CD4-positive, alpha-beta memory T cell (primary cell): ENCODE measurements at regions of chr9 and their contacts with region 1.

Region 1: GRCh38 chr9:133701862-133702797 is 36.0 kb downstream of the SARDH start:
- DNase-seq: peak; percentile 69 to 81 (median 75)
- H3K4me3 ChIP-seq: peak overlapping the region; percentile 27 to 61
- H3K4me3 Mint-ChIP-seq: peak overlapping the region; percentile 83 to 93 (median 89)
- H3K27ac ChIP-seq: peak overlapping the region; percentile 74
- H3K27ac Mint-ChIP-seq: peak overlapping the region; percentile 96 to 99 (median 98)
- H3K4me1 ChIP-seq: peaks cover 65% of the 10 kb centered on the region
- H3K4me1 Mint-ChIP-seq: peaks cover 36 to 75% (median 53%) of the 10 kb centered on the region in 4 donors
- H3K27me3 ChIP-seq: no peaks in the 10 kb centered on the region
- H3K27me3 Mint-ChIP-seq: no peaks in the 10 kb centered on the region

Region 2: DNA sequence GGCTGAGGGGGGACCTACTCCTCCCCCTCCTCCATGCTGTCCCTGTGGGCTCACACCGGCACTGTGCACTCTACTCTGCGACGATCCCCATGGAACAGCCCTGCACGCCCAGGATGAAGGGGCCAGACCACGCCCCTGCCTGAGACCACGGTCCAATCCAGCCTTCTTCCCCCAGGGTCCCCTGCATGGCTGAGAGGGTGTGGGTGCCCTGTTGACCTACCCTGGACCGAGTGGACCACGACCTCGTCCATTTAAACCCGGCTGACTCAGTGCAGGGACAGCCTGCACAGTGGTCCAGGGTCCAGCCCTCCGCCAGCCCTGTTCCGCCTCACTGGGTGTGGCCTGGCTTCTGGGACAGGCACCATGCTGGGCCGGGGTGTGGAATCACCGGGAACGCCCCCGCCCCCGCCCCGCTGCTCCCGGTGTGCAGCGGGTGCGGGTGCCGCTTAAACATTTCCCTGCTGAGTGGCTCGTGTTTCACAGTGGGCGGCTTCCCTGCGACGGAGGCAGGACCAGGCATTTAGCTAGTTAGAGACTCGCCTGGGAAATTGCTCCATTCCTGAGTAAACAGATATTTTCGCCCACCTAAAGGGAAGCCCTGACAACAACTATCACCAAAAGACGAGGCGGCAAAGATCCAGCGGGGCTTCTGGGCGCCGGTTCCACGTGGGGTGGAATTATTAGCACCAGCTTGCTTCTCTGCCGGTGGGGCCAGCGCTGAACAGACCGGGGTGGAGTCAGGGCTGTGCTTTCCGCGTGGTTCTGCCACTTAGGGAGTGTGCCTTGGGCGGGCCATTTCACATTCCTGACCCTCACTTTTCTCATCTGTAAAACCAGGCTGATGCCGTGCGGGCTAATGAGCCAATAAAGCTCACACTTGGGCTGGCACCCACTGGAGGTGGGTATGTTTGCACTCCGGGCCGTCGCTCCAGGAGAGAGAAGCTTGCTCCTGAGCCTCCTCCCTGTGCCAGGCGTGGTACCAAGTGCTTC is 43.4 kb before region 1 on chr9:
- CTCF ChIA-PET with region 1: no interaction called
- POLR2A ChIA-PET with region 1: interaction called, 10 read pairs
- intact Hi-C with region 1: loop called (anchors 2 kb)
- DNase-seq: no peak
- H3K4me3 ChIP-seq: no peak overlapping the region
- H3K4me3 Mint-ChIP-seq: peak overlapping the region in 5 of 8 donors; percentile 27 to 74 (median 69)
- H3K27ac ChIP-seq: no peak overlapping the region
- H3K27ac Mint-ChIP-seq: peak overlapping the region in 2 of 7 donors; percentile 15 to 77
- H3K4me1 ChIP-seq: peaks cover 34% of the 10 kb centered on the region
- H3K4me1 Mint-ChIP-seq: peaks cover 12 to 43% (median 24%) of the 10 kb centered on the region in 4 donors
- H3K27me3 ChIP-seq: peaks cover 6% of the 10 kb centered on the region
- H3K27me3 Mint-ChIP-seq: peaks cover 8 to 36% of the 10 kb centered on the region in 2 donors

Region 3: GRCh38 chr9:133677126-133678010 is 24.8 kb before region 1 on chr9:
- CTCF ChIA-PET with region 1: interaction called, 7 read pairs
- POLR2A ChIA-PET with region 1: interaction called, 140 read pairs
- intact Hi-C with region 1: no loop called
- DNase-seq: peak; percentile 80 to 91 (median 84)
- H3K4me3 ChIP-seq: peak overlapping the region in 1 of 2 donors; percentile 33
- H3K4me3 Mint-ChIP-seq: peak overlapping the region; percentile 9 to 81 (median 64)
- H3K27ac ChIP-seq: peak overlapping the region; percentile 86
- H3K27ac Mint-ChIP-seq: peak overlapping the region; percentile 94 to 100 (median 100)
- H3K4me1 ChIP-seq: peaks cover 38% of the 10 kb centered on the region
- H3K4me1 Mint-ChIP-seq: peaks cover 21 to 59% (median 40%) of the 10 kb centered on the region in 4 donors
- H3K27me3 ChIP-seq: no peaks in the 10 kb centered on the region
- H3K27me3 Mint-ChIP-seq: no peaks in the 10 kb centered on the region

Region 4: DNA sequence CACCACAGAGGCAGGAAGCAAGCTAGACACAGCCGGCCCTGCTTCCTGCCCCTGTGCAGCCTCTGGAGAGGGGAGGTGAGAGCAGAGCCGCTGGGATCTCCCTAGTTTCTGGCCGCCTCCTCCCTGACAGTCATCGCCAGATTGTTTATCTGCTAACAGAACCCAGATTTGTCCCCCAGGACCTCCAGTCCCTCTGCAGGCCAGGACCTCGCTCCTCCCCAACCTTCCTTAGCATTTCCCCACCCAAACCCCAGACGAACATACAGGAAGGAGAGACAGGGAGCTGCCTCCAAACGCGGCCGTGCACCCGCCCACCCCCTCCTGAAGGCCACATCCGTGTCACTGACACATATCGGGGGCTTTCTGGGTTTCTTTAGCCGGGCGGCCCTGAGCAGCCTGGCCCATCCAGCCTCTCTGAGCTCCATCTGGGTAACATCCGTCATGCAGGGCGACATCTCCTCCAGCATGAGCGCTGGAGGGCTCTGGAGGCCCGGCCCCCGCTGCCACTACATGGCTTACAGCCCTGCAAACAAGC is 18.5 kb before region 1 on chr9:
- CTCF ChIA-PET with region 1: interaction called, 12 read pairs
- POLR2A ChIA-PET with region 1: interaction called, 140 read pairs
- intact Hi-C with region 1: loop called (anchors 1 kb)
- DNase-seq: peak; percentile 70 to 91 (median 81)
- H3K4me3 ChIP-seq: peak overlapping the region in 1 of 2 donors; percentile 9
- H3K4me3 Mint-ChIP-seq: peak overlapping the region; percentile 74 to 93 (median 84)
- H3K27ac ChIP-seq: peak overlapping the region; percentile 89
- H3K27ac Mint-ChIP-seq: peak overlapping the region; percentile 92 to 100 (median 99)
- H3K4me1 ChIP-seq: peaks cover 34% of the 10 kb centered on the region
- H3K4me1 Mint-ChIP-seq: peaks cover 18 to 42% (median 31%) of the 10 kb centered on the region in 4 donors
- H3K27me3 ChIP-seq: no peaks in the 10 kb centered on the region
- H3K27me3 Mint-ChIP-seq: no peaks in the 10 kb centered on the region

Region 5: GRCh38 chr9:133691626-133692363 is 10.3 kb before region 1 on chr9:
- CTCF ChIA-PET with region 1: interaction called, 7 read pairs
- POLR2A ChIA-PET with region 1: interaction called, 140 read pairs
- intact Hi-C with region 1: no loop called
- DNase-seq: no peak
- H3K4me3 ChIP-seq: no peak overlapping the region
- H3K4me3 Mint-ChIP-seq: no peak overlapping the region
- H3K27ac ChIP-seq: no peak overlapping the region
- H3K27ac Mint-ChIP-seq: peak overlapping the region in 1 of 7 donors; percentile 72
- H3K4me1 ChIP-seq: no peaks in the 10 kb centered on the region
- H3K4me1 Mint-ChIP-seq: peaks cover 7 to 10% (median 9%) of the 10 kb centered on the region in 4 donors
- H3K27me3 ChIP-seq: no peaks in the 10 kb centered on the region
- H3K27me3 Mint-ChIP-seq: no peaks in the 10 kb centered on the region